ENCODE measurements at regions of chr4 and their contacts with region 1.

Region 1: GRCh38 chr4:40301603-40302002 is 33.5 kb upstream of the CHRNA9 start:
- DNase-seq: peak; percentile 51
- ATAC-seq: peak; percentile 53
- H3K4me3 Mint-ChIP-seq: peak overlapping the region; percentile 79
- H3K27ac Mint-ChIP-seq: peak overlapping the region; percentile 95
- H3K4me1 Mint-ChIP-seq: peaks cover 88% of the 10 kb centered on the region
- H3K27me3 Mint-ChIP-seq: no peaks in the 10 kb centered on the region
- CTCF ChIP-seq: no peak

Region 2: DNA sequence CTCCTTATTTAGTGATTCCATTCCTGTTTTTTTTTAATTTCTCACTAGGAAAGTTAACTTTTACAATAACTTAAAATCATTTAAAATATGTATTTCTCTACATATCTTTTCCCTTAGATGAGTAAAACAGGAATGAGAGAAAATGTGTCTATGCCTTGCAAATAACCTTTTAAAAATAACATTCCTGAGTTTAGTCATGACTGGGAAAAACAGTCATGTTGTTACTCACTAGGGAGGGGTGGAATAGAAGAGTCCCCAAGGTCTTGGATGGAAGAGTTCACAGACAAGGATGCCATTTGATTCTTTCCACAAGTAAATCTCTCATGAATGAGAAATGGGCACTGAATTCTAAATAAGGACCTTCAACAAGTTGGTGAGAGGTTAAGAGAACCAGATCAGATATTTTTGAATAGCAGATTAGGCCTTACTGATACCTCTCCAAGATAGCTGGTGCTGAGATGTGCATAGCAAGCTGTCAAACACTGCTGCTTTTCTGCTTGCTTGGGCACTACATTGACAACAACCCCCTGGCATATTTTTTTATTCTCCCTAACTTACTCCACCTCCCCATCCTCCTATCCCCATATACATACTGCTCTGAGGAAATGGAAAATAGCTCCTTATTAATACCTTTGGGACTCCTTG is 799.5 kb before region 1 on chr4:
- CTCF ChIA-PET with region 1: no interaction called
- POLR2A ChIA-PET with region 1: no interaction called
- intact Hi-C with region 1: no loop called
- DNase-seq: no peak
- ATAC-seq: no peak
- H3K4me3 Mint-ChIP-seq: no peak overlapping the region
- H3K27ac Mint-ChIP-seq: no peak overlapping the region
- H3K4me1 Mint-ChIP-seq: no peaks in the 10 kb centered on the region
- H3K27me3 Mint-ChIP-seq: no peaks in the 10 kb centered on the region
- CTCF ChIP-seq: no peak

Region 3: DNA sequence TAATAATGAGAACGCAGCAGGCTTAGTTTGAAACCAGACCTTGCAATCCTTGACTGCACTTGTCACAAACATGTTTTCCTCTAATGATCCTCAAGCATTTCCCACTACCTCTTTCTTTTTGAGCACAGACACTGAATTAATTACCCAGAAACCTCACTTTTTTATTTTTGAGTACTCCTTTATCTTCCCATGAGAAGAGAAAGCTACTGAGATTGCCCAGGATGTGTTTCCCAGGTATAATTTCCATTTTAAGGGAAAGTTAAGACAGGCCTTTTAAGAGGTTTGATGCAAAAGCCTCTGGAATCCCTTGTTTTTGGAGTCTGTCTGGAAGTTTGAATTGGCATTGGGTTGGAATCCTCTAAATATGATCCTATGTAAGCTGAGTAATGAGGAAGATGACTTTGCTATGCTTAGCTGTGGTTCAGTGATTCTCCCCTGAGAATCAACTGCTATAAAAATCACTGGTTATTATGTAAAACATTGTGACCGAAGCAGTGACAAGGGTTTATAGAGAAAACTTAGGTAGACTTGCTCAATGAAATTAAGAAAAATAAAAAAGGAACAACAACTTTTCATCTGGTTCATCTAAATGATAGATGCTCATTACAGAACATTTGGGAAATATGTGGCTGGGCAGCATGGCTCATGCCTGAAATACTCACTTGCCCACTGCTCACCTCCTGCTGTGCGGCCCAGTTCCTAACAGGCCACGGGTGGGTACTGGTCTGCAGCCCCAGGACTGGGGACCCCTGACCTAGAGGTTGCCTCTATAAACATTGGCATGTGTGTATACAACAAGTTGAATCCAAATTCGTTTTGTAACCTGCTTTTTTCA is 115.6 kb before region 1 on chr4:
- CTCF ChIA-PET with region 1: interaction called, 3 read pairs
- POLR2A ChIA-PET with region 1: interaction called, 108 read pairs
- intact Hi-C with region 1: loop called (anchors 1 kb)
- DNase-seq: no peak
- ATAC-seq: peak; percentile 78
- H3K4me3 Mint-ChIP-seq: peak overlapping the region; percentile 80
- H3K27ac Mint-ChIP-seq: peak overlapping the region; percentile 91
- H3K4me1 Mint-ChIP-seq: peaks cover 88% of the 10 kb centered on the region
- H3K27me3 Mint-ChIP-seq: no peaks in the 10 kb centered on the region
- CTCF ChIP-seq: no peak

Region 4: DNA sequence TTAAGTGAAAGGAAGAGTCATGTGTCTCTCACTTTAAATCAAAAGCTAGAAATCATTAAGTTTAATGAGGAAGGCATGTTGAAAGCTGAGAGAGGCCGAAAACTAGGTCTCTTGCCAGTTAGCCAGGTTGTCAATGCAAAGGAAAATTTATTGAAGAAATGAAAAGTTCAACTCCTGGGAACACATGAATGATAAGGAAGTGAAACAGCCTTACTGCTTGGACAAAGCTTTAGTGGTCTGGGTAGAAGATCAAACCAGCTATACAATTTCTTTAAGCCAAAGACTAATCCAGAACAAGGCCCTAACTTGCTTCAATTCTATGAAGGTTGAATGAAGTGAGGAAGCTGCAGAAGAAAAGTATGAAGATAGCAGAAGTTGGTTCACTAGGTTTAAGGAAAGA is 79.9 kb before region 1 on chr4:
- CTCF ChIA-PET with region 1: no interaction called
- POLR2A ChIA-PET with region 1: interaction called, 12 read pairs
- intact Hi-C with region 1: no loop called
- DNase-seq: no peak
- ATAC-seq: no peak
- H3K4me3 Mint-ChIP-seq: peak overlapping the region; percentile 26
- H3K27ac Mint-ChIP-seq: peak overlapping the region; percentile 70
- H3K4me1 Mint-ChIP-seq: peaks cover 94% of the 10 kb centered on the region
- H3K27me3 Mint-ChIP-seq: no peaks in the 10 kb centered on the region
- CTCF ChIP-seq: no peak

Region 5: GRCh38 chr4:40289366-40290188 is 12.0 kb before region 1 on chr4:
- CTCF ChIA-PET with region 1: no interaction called
- POLR2A ChIA-PET with region 1: interaction called, 14 read pairs
- intact Hi-C with region 1: loop called (anchors 1 kb)
- DNase-seq: no peak
- ATAC-seq: peak; percentile 70
- H3K4me3 Mint-ChIP-seq: peak overlapping the region; percentile 33
- H3K27ac Mint-ChIP-seq: peak overlapping the region; percentile 85
- H3K4me1 Mint-ChIP-seq: peaks cover 77% of the 10 kb centered on the region
- H3K27me3 Mint-ChIP-seq: no peaks in the 10 kb centered on the region
- CTCF ChIP-seq: no peak

Region 6: GRCh38 chr4:40446839-40447238 is 145.2 kb after region 1 on chr4:
- CTCF ChIA-PET with region 1: no interaction called
- POLR2A ChIA-PET with region 1: no interaction called
- intact Hi-C with region 1: no loop called
- DNase-seq: no peak
- ATAC-seq: no peak
- H3K4me3 Mint-ChIP-seq: no peak overlapping the region
- H3K27ac Mint-ChIP-seq: no peak overlapping the region
- H3K4me1 Mint-ChIP-seq: peaks cover 3% of the 10 kb centered on the region
- H3K27me3 Mint-ChIP-seq: no peaks in the 10 kb centered on the region
- CTCF ChIP-seq: no peak

Measured in activated B cell treated with CpG ODN at 0.5 μM for 24 hours (primary cell).